Breast epithelium (tissue), 4 donors: ENCODE measurements at regions of chr7 and their contacts with region 1.

Region 1: DNA sequence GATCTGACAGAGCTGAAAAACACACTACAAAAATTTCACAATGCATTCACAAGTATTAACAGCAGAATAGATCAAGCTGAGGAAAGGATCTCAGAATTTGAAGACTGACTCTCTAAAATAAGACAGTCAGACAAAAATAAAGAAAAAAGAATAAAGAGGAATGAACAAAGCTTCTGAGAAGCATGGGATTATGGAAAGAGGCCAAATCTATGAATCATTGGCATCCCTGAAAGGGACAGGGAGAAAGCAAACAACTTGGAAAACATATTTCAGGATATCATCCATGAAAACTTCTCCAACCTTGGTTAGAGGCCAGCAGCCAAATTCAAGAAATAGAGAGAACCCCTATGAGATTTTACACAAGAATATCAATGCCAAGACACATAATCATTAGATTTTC is 804.8 kb upstream of the IGFBP3 start:
- DNase-seq: no peak
- H3K4me3 ChIP-seq: no peak overlapping the region
- H3K27ac ChIP-seq: no peak overlapping the region
- H3K4me1 ChIP-seq: no peaks in the 10 kb centered on the region
- H3K27me3 ChIP-seq: no peaks in the 10 kb centered on the region
- CTCF ChIP-seq: no peak
- POLR2A ChIP-seq: no peak

Region 2: GRCh38 chr7:45917658-45918057 is 808.2 kb before region 1 on chr7:
- intact Hi-C with region 1: no loop called
- DNase-seq: peak; percentile 46 to 81
- H3K4me3 ChIP-seq: peak overlapping the region; percentile 17 to 62 (median 37)
- H3K27ac ChIP-seq: no peak overlapping the region
- H3K4me1 ChIP-seq: peaks cover 0 to 7% of the 10 kb centered on the region in 2 donors
- H3K27me3 ChIP-seq: no peaks in the 10 kb centered on the region
- CTCF ChIP-seq: peak; percentile 78 to 90 (median 86)
- POLR2A ChIP-seq: no peak

Region 3: DNA sequence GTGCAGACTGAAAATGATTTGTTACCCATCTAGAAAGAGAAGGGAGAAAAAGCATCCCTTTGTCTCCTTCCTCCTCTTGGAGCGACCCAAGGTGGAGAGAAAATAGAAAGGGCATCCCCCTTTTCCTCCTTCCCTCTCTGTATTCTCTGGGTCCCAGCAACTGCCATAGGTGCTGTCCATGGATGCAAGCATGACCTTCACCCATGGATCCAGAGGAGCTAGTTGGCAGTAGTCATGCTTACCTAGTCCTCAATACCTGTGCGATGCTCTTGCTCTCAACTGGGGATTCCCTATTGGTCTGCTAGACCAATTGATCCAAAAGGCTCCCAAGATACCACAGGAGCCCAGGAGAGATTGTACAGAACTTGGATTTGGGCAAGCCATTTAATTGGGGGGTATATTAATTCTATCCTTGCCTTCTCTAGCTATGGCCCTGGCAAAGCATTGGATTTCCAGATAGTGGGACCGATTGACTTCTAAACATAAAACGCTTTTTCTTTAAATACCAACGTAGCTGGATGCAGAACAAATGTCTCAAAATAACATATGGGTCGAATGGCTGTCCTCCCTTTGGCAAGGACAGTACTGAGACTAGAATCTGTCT is 257.0 kb before region 1 on chr7:
- intact Hi-C with region 1: loop called (anchors 5 kb)
- DNase-seq: no peak
- H3K4me3 ChIP-seq: no peak overlapping the region
- H3K27ac ChIP-seq: no peak overlapping the region
- H3K4me1 ChIP-seq: no peaks in the 10 kb centered on the region
- H3K27me3 ChIP-seq: no peaks in the 10 kb centered on the region
- CTCF ChIP-seq: no peak
- POLR2A ChIP-seq: no peak